ENCODE measurements at regions of chr2 and their contacts with region 1.

Region 1: GRCh38 chr2:43194121-43194869 is 32.1 kb downstream of the ZFP36L2 start:
- DNase-seq: peak; percentile 98
- ATAC-seq: peak; percentile 87
- H3K4me3 ChIP-seq: peak overlapping the region; percentile 49 to 76 (median 64)
- H3K27ac ChIP-seq: peak overlapping the region; percentile 95
- H3K4me1 ChIP-seq: peaks cover 96% of the 10 kb centered on the region
- H3K27me3 ChIP-seq: no peaks in the 10 kb centered on the region
- CTCF ChIP-seq: peak; percentile 14; the same call in 1 of the 2 replicates
- EP300 ChIP-seq: peak; percentile 70 to 94; a peak in 3 of 4 replicates
- POLR2A ChIP-seq: peak in 1 of 2 experiments; percentile 79; a peak in 2 of 4 replicates
- RAD21 ChIP-seq: no peak; the same call in 1 of the 2 replicates

Region 2: GRCh38 chr2:43169987-43170386 is 24.3 kb before region 1 on chr2:
- CTCF ChIA-PET with region 1: no interaction called
- POLR2A ChIA-PET with region 1: interaction called, 97 read pairs
- in situ Hi-C with region 1: no loop called
- intact Hi-C with region 1: no loop called
- DNase-seq: no peak
- ATAC-seq: peak; percentile 40
- H3K4me3 ChIP-seq: no peak overlapping the region
- H3K27ac ChIP-seq: no peak overlapping the region
- H3K4me1 ChIP-seq: peaks cover 72% of the 10 kb centered on the region
- H3K27me3 ChIP-seq: no peaks in the 10 kb centered on the region
- CTCF ChIP-seq: peak; percentile 85
- EP300 ChIP-seq: no peak
- POLR2A ChIP-seq: no peak
- RAD21 ChIP-seq: peak; percentile 61

Region 3: GRCh38 chr2:43178602-43179542 is 15.4 kb before region 1 on chr2:
- CTCF ChIA-PET with region 1: no interaction called
- POLR2A ChIA-PET with region 1: interaction called, 97 read pairs
- in situ Hi-C with region 1: no loop called
- intact Hi-C with region 1: loop called (anchors 1 kb)
- DNase-seq: peak; percentile 90
- ATAC-seq: peak; percentile 88
- H3K4me3 ChIP-seq: peak overlapping the region; percentile 43 to 62 (median 61)
- H3K27ac ChIP-seq: peak overlapping the region; percentile 81
- H3K4me1 ChIP-seq: peaks cover 77% of the 10 kb centered on the region
- H3K27me3 ChIP-seq: no peaks in the 10 kb centered on the region
- CTCF ChIP-seq: peak; percentile 1; the same call in 1 of the 2 replicates
- EP300 ChIP-seq: peak in 1 of 2 experiments; percentile 77; a peak in 2 of 4 replicates
- POLR2A ChIP-seq: no peak; a peak in 1 of 4 replicates
- RAD21 ChIP-seq: peak; percentile 20; the same call in 1 of the 2 replicates

Region 4: DNA sequence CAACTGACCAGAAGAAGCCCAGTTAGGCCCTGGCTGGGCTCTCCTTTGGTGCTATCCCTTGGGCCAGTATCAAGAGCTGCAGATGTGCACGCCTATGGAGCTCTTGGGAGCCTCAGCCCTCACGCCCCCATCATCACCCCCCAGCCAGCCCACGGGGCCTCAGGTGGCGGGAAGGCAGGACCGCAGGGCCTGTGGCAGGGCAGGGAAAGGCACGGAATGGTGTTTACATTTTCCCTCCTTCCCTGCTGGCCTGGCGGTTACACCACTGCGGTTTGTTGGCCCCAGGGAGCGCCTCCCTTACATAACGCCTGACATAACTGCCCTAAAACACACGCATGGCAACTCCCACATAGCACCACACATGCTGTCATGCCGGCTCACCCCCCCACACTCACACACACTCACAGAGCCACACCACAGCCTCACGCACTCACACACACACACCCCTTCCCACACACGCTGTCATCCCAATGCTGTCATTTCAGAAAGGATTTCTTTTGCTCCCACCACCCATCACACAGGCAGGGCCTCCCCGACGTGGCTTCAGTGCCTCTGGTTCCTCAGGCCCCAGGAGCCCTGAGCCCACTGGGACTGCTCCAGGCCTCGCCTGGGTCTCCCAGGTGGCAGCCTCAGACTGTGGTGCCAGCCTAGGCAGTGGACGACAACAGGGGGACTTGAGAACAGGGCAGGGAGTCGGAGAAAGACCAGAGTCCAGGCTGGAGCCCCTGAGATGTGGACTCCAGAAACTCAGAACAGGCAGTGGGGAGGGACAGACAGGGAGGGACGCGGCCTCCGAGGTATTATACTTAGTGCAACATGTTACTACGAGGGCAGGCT is 16.4 kb after region 1 on chr2:
- CTCF ChIA-PET with region 1: no interaction called
- POLR2A ChIA-PET with region 1: interaction called, 12 read pairs
- in situ Hi-C with region 1: no loop called
- intact Hi-C with region 1: no loop called
- DNase-seq: peak; percentile 72
- ATAC-seq: peak; percentile 75
- H3K4me3 ChIP-seq: peak overlapping the region in 1 of 3 experiments; percentile 38; a peak in 1 of 6 replicates
- H3K27ac ChIP-seq: peak overlapping the region; percentile 43
- H3K4me1 ChIP-seq: peaks cover 58% of the 10 kb centered on the region
- H3K27me3 ChIP-seq: no peaks in the 10 kb centered on the region
- CTCF ChIP-seq: peak; percentile 48
- EP300 ChIP-seq: peak in 1 of 2 experiments; percentile 82; a peak in 2 of 4 replicates
- POLR2A ChIP-seq: no peak
- RAD21 ChIP-seq: no peak

Measured in HepG2 (cell line).